ENCODE measurements at regions of chr4 and their contacts with region 1.

Region 1: GRCh38 chr4:99855678-99856077 is 38.5 kb downstream of the LAMTOR3 start:
- DNase-seq: no peak
- H3K4me3 Mint-ChIP-seq: peak overlapping the region; percentile 59
- H3K27ac Mint-ChIP-seq: peak overlapping the region; percentile 71
- H3K4me1 Mint-ChIP-seq: peaks cover 86% of the 10 kb centered on the region
- H3K27me3 Mint-ChIP-seq: no peaks in the 10 kb centered on the region

Region 2: GRCh38 chr4:98482847-98483806 is 1372.6 kb before region 1 on chr4:
- intact Hi-C with region 1: loop called (anchors 2 kb)
- DNase-seq: peak; percentile 40
- H3K4me3 Mint-ChIP-seq: peak overlapping the region; percentile 72
- H3K27ac Mint-ChIP-seq: peak overlapping the region; percentile 98
- H3K4me1 Mint-ChIP-seq: peaks cover 92% of the 10 kb centered on the region
- H3K27me3 Mint-ChIP-seq: no peaks in the 10 kb centered on the region

Region 3: DNA sequence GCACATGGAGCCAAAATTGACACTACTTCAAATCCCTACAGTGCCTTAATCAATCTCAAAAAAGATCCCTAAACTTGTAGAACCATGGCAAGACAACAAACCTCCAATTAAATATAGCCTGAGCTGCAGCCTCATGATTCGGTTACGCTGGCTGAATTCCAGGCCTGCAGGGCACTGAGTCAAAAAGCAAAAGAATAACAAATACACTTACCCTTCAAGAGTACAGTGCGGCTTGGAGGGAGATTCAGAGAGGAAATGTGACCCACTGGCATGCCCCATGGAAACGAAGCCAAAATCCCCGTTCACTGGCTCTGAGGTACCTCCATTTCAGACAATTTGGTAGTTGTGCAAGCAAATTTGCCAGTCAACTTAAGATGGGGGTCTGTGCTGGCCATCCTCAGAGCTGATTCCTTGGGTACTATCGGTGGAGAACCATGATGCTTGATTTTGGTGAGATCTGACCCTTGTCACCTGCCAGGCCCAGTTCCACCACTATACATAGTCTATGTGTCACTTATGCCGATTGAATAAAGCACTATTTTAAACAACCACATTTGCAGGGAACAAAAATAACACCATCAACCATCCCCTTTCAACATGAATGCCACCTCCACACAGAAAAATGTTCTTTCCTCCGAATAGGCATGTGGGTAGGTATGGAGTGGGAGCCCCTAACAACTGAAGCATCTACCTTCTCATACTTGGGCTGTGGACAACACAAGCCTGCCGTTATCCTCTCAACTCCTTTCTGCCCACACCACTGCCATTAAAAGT is 200.2 kb before region 1 on chr4:
- intact Hi-C with region 1: no loop called
- DNase-seq: no peak
- H3K4me3 Mint-ChIP-seq: no peak overlapping the region
- H3K27ac Mint-ChIP-seq: no peak overlapping the region
- H3K4me1 Mint-ChIP-seq: no peaks in the 10 kb centered on the region
- H3K27me3 Mint-ChIP-seq: peaks cover 3% of the 10 kb centered on the region

Region 4: DNA sequence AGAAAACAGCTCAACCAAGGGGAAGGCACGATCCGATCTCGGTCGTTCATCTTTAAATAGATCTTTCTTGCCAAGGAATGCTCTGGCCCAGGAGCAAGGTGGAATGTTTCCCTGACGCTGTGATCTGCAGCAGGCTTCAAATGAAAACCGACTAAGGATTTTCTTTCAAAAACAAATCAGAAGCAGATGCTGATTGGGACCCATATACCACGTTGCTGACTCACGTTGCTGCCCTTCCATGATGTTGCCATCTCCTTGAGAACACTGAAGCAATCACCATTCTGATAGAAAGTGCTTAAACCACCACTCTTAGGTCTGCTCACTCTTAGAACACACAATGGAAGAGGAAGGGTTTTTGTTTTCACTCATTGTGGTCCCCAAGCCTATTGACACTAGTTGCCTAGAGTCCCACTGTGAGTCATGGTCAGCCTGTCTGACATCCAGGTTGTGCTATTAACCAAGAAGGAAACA is 12.5 kb after region 1 on chr4:
- intact Hi-C with region 1: loop called (anchors 1 kb)
- DNase-seq: no peak
- H3K4me3 Mint-ChIP-seq: no peak overlapping the region
- H3K27ac Mint-ChIP-seq: no peak overlapping the region
- H3K4me1 Mint-ChIP-seq: peaks cover 15% of the 10 kb centered on the region
- H3K27me3 Mint-ChIP-seq: no peaks in the 10 kb centered on the region

Region 5: GRCh38 chr4:100070868-100071267 is 215.2 kb after region 1 on chr4:
- intact Hi-C with region 1: no loop called
- DNase-seq: no peak
- H3K4me3 Mint-ChIP-seq: no peak overlapping the region
- H3K27ac Mint-ChIP-seq: no peak overlapping the region
- H3K4me1 Mint-ChIP-seq: no peaks in the 10 kb centered on the region
- H3K27me3 Mint-ChIP-seq: no peaks in the 10 kb centered on the region

Region 6: GRCh38 chr4:100082852-100083251 is 227.2 kb after region 1 on chr4:
- intact Hi-C with region 1: loop called (anchors 5 kb)
- DNase-seq: no peak
- H3K4me3 Mint-ChIP-seq: no peak overlapping the region
- H3K27ac Mint-ChIP-seq: peak overlapping the region; percentile 67
- H3K4me1 Mint-ChIP-seq: peaks cover 58% of the 10 kb centered on the region
- H3K27me3 Mint-ChIP-seq: no peaks in the 10 kb centered on the region

Region 7: DNA sequence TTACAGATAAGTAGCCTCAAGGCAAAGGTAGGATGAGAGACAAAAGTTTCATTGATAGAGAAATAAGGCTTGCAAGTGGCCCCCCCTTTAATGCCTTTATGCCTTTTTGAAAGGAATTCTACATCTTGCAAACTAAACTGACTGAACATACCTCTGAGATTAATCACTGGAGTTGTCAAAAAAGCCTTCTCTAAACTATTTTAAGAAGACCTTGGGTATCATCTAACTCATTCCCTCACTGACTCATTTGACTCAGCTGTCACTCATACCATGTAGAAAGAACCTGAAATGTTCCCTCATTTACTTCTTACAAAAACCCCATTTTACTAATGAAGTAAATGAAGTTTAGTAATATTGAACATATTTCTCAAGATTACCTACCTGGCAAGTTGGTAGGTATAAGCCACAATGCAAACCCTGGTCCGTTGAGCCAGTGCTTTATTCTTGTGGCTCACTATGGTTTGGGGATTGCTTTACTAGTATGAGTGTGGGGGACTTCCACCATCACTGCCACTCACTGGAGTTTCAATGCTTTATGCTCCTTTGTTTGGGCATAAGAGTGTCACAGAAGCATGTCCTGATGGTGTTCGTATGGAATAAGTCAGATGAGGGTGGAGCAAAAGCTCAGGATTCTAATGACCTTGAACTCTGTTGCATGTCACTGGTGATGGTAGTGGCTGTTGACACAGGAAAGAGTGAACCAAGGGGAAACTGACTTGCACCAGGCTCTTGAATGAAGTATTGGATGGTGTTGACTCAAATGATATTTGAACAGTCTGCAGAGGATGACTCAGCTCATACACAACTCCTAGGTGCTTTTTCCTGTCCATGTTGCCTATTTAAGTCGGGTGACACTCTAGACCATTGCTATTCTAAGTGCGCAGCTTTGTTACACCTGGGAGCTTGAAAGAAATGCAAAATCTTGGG is 967.7 kb after region 1 on chr4:
- intact Hi-C with region 1: loop called (anchors 2 kb)
- DNase-seq: peak; percentile 32
- H3K4me3 Mint-ChIP-seq: no peak overlapping the region
- H3K27ac Mint-ChIP-seq: peak overlapping the region; percentile 79
- H3K4me1 Mint-ChIP-seq: peaks cover 40% of the 10 kb centered on the region
- H3K27me3 Mint-ChIP-seq: no peaks in the 10 kb centered on the region

Measured in activated T-helper 1 cell treated with anti-CD3 and anti-CD28 coated beads, Interleukin-12 subunit alpha, Interleukin-12 subunit beta, Interleukin-2, Interleukin-4 antibody, amounts not matched to agents 30 ng/mL and 10 ng/mL and 1 ng/mL, durations not matched to agents 14 hours and 24 hours and 36 hours (primary cell).